Lower leg skin (tissue), 4 donors: ENCODE measurements at regions of chr22 and their contacts with region 1.

Region 1: GRCh38 chr22:41946629-41947423 is at the start of gene CENPM:
- DNase-seq: peak; percentile 92 to 97
- H3K4me3 ChIP-seq: peak within 1 kb of the TSS; percentile 40
- CTCF ChIP-seq: no peak
- POLR2A ChIP-seq: no peak
- total RNA-seq, gene CENPM: 5.9 to 20.2 (median 9.1) TPM

Region 2: GRCh38 chr22:41697126-41697775 is 249.6 kb before region 1 on chr22:
- intact Hi-C with region 1: loop called (anchors 10 kb)
- DNase-seq: peak; percentile 89 to 99
- H3K4me3 ChIP-seq: no peak overlapping the region
- CTCF ChIP-seq: peak in 1 of 3 donors; percentile 94
- POLR2A ChIP-seq: no peak

Region 3: GRCh38 chr22:41822317-41823060 is 124.3 kb before region 1 on chr22:
- intact Hi-C with region 1: loop called (anchors 10 kb)
- DNase-seq: no peak
- H3K4me3 ChIP-seq: no peak overlapping the region
- CTCF ChIP-seq: peak in 1 of 3 donors; percentile 16
- POLR2A ChIP-seq: no peak

Region 4: DNA sequence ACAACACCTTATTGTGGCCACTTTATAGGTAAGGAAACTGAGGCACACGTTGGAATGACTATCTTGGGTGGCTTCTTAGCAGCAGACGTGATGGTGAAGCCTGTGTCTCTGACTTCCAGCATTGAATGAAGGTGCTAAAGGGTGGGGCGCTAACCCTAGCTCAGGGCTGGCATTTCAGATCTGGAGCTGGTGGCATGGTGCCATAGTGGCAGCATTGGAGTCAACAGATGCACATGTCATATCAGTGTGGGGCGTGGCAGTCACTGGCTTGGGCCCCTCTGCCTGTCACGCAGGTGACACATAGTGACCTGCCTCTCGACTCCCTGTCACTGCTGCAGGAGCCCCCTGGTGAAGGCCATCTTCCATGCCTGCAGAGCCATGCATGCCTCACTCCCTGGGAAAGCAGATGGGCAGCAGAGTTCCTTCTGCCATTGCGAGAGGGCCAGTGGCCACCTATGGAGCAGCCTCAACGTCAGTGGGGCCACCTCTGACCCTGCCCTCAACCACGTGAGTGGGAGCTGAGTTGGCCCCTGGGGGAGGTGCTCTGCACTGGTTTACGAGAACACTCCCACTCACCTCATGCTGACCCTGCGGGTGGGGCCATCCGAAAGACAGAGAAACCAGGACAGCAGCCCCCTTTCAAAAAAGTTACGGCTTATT is 46.7 kb before region 1 on chr22:
- intact Hi-C with region 1: no loop called
- DNase-seq: no peak
- H3K4me3 ChIP-seq: no peak overlapping the region
- CTCF ChIP-seq: no peak
- POLR2A ChIP-seq: no peak